ENCODE measurements at regions of chr15 and their contacts with region 1.

Region 1: DNA sequence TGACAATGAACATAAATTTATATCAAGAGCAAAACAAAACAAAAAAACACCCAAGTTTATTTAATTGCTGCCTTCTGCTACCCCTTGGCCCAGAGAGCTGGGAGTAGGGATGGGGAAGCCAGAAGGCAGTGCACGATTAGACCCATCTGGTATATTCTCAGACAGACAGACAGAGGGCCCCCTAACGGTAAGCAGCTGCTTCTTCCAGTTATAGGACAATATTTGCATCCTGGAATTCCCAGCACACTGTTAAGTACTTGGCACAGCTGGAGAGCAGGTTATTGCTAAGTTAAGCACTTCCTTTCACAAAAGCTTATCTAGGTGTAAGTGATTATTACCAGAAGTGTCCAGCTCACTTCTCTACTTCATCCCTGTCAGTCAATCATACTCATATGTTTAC is 39.3 kb downstream of the C2CD4B start:
- DNase-seq: no peak
- H3K4me3 Mint-ChIP-seq: no peak overlapping the region
- H3K27ac Mint-ChIP-seq: no peak overlapping the region
- H3K4me1 Mint-ChIP-seq: peaks cover 42% of the 10 kb centered on the region
- H3K27me3 Mint-ChIP-seq: peaks cover 7% of the 10 kb centered on the region

Region 2: GRCh38 chr15:61935493-61935892 is 190.3 kb before region 1 on chr15:
- CTCF ChIA-PET with region 1: no interaction called
- DNase-seq: no peak
- H3K4me3 Mint-ChIP-seq: no peak overlapping the region
- H3K27ac Mint-ChIP-seq: no peak overlapping the region
- H3K4me1 Mint-ChIP-seq: no peaks in the 10 kb centered on the region
- H3K27me3 Mint-ChIP-seq: no peaks in the 10 kb centered on the region

Region 3: DNA sequence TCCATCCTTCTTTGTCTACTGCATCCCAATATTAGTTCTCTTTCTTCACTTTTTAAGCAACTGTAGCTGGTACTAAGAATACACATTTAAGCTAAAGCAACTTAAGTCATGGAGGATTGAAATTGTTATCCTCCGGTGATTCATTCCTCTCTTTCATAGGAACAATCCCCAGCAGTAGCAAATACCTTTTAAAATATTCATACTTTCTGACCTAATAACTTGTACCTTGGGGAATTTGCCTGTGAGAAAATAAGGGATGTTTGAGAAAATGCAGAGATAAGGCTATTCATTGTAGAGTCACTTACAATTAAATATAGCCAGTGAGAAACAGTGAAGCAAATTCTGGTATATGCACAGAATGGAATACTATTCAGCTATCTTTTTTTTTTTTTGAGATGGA is 131.6 kb before region 1 on chr15:
- CTCF ChIA-PET with region 1: no interaction called
- DNase-seq: no peak
- H3K4me3 Mint-ChIP-seq: no peak overlapping the region
- H3K27ac Mint-ChIP-seq: no peak overlapping the region
- H3K4me1 Mint-ChIP-seq: no peaks in the 10 kb centered on the region
- H3K27me3 Mint-ChIP-seq: no peaks in the 10 kb centered on the region

Region 4: GRCh38 chr15:62142731-62143130 is 17.0 kb after region 1 on chr15:
- CTCF ChIA-PET with region 1: interaction called, 14 read pairs
- DNase-seq: no peak
- H3K4me3 Mint-ChIP-seq: no peak overlapping the region
- H3K27ac Mint-ChIP-seq: no peak overlapping the region
- H3K4me1 Mint-ChIP-seq: peaks cover 3% of the 10 kb centered on the region
- H3K27me3 Mint-ChIP-seq: no peaks in the 10 kb centered on the region

Region 5: GRCh38 chr15:62254137-62254934 is 128.6 kb after region 1 on chr15:
- CTCF ChIA-PET with region 1: interaction called, 21 read pairs
- DNase-seq: peak; percentile 74
- H3K4me3 Mint-ChIP-seq: no peak overlapping the region
- H3K27ac Mint-ChIP-seq: no peak overlapping the region
- H3K4me1 Mint-ChIP-seq: no peaks in the 10 kb centered on the region
- H3K27me3 Mint-ChIP-seq: peaks cover 29% of the 10 kb centered on the region

Region 6: DNA sequence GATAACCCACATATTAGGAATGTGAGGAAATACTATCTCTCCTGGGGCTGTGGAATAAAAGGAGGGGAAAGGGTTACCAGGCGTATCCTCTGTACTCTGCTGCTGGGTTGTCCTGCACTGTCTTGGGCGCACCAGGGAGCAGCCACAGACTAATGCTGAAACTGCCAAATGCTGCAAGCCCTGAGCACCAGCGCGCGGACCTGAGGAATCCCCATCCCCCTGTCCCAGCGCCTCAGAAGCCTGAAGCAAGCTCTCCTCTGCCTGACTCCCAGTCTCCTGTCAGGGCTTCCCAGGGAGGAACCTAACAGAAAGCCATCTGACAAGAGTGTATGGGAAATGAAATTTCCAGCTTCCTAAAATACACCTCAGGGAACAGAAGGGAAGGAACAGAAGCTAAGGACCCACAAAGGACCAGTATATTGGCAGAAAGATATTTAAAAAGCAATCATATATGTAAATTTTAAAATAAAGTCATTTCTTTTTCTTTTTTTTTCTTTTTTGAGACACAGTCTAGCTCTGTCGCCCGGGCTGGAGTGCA is 197.6 kb after region 1 on chr15:
- CTCF ChIA-PET with region 1: no interaction called
- DNase-seq: no peak
- H3K4me3 Mint-ChIP-seq: no peak overlapping the region
- H3K27ac Mint-ChIP-seq: no peak overlapping the region
- H3K4me1 Mint-ChIP-seq: no peaks in the 10 kb centered on the region
- H3K27me3 Mint-ChIP-seq: peaks cover 26% of the 10 kb centered on the region

Measured in activated naive CD4-positive, alpha-beta T cell treated with anti-CD3 and anti-CD28 coated beads, Interleukin-2, amount 10 ng/mL, durations not matched to agents 7 days and 5 days (primary cell).